GM10248 (cell line): ENCODE measurements at regions of chr1 and their contacts with region 1.

Region 1: GRCh38 chr1:246280551-246280950 is 226.5 kb downstream of the SMYD3 start:
- DNase-seq: no peak
- CTCF ChIP-seq: peak; percentile 28

Region 2: GRCh38 chr1:246267896-246268295 is 12.7 kb before region 1 on chr1:
- CTCF ChIA-PET with region 1: interaction called, 17 read pairs
- POLR2A ChIA-PET with region 1: no interaction called
- DNase-seq: no peak
- CTCF ChIP-seq: no peak

Region 3: DNA sequence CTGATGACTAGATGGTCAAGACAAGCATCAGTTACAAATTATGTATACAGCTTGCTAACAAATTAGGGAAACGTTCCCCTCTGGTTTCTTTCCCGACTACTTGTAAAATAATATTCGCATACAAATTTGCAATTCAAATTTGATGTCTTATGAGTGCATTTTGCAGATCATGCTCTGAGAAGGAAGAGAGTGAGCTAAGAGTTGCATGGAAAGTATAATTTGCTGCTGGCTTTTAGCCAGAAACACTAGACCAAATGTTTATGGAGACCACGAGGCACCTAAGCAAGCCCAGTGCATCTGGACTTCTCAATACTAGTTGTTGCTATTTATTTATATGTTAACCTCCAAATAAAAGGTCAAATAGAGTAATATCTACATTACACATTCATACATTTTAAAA is 10.6 kb after region 1 on chr1:
- CTCF ChIA-PET with region 1: interaction called, 11 read pairs
- POLR2A ChIA-PET with region 1: no interaction called
- DNase-seq: no peak
- CTCF ChIP-seq: no peak

Region 4: DNA sequence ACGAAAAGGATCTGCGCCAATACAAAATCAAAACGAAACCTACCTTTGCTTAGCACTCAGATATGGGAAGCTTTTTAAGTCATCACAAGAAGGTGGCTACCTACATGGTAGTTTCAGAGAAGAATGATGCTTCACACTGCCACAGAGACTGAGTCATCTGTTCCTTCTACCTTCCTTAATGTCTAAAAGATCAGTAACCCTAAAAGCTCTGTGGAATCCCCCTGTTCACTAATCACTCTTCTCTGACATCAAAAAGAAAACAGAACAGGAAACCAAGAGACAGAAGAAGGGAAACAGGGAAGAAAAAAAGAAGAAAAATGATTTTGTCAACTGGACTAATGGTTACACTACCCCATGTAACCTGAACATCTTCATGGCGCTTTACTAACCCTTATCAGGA is 49.3 kb after region 1 on chr1:
- CTCF ChIA-PET with region 1: no interaction called
- POLR2A ChIA-PET with region 1: no interaction called
- DNase-seq: peak; percentile 80
- CTCF ChIP-seq: no peak